HEK293 (cell line): ENCODE measurements at regions of chr11 and their contacts with region 1.

Region 1: DNA sequence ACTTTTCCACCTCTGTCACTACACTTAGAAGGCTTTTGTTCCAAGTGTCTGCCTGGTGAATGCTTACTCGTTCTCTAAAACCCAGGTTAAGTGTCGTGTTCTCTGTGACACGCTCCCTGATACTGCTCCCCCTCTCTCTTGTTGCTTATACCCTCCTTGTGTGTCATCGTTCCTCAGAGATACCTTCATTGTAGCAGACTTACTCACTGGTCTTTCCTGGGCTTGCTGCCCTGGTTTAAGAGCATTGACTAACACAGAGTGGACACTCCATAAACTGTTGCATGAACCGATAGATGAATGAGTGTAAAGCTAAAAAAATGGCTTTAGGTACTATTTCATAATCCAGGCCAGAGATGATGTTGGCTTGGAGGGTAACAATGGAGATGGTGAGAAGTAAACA is 171.3 kb downstream of the GRIK4 start:
- H3K4me3 ChIP-seq: no peak overlapping the region
- H3K27ac ChIP-seq: no peak overlapping the region
- H3K4me1 ChIP-seq: no peaks in the 10 kb centered on the region
- CTCF ChIP-seq: no peak

Region 2: GRCh38 chr11:120511116-120511819 is 171.6 kb before region 1 on chr11 and contains the start of gene GRIK4:
- CTCF ChIA-PET with region 1: interaction called, 59 read pairs
- POLR2A ChIA-PET with region 1: interaction called, 4 read pairs
- H3K4me3 ChIP-seq: peak within 1 kb of the TSS; percentile 42
- H3K27ac ChIP-seq: peak within 1 kb of the TSS; percentile 53; the same call in 1 of the 2 replicates
- H3K4me1 ChIP-seq: no peaks in the 10 kb centered on the region
- CTCF ChIP-seq: peak; percentile 90

Region 3: GRCh38 chr11:120667281-120667680 is 15.6 kb before region 1 on chr11:
- CTCF ChIA-PET with region 1: interaction called, 36 read pairs
- POLR2A ChIA-PET with region 1: no interaction called
- H3K4me3 ChIP-seq: no peak overlapping the region
- H3K27ac ChIP-seq: no peak overlapping the region
- H3K4me1 ChIP-seq: no peaks in the 10 kb centered on the region
- CTCF ChIP-seq: no peak

Region 4: DNA sequence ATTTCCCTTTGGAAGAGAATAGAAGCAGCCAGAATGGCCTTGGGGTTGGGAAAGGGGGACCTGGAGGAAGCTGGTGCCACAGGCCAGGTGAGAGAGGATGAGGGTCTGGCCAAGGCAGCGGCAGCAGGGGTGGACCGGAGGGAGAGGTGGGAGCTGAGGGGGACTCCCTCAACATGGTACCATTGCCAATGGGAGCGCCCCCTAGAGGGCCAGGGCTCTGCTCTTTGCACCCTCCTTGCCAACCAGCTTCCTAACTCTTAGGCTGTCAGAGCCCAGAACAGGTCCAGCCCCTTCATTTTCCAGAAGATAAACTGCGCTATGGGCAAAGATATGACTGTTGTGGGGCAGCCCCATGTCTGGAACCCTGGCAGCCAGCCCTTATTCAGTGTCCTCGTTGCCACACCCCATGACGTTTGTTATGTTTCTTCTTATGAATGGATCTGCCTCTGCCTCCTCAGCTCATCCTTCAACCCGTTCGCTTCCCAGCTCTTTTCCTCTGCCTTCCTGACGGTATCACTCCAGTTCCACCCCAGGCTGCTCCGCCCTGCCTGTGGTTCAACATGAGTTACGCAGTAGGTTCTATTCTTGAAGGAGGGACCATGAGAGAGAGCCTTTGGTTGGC is 13.8 kb after region 1 on chr11:
- CTCF ChIA-PET with region 1: interaction called, 59 read pairs
- POLR2A ChIA-PET with region 1: interaction called, 3 read pairs
- H3K4me3 ChIP-seq: no peak overlapping the region
- H3K27ac ChIP-seq: no peak overlapping the region
- H3K4me1 ChIP-seq: no peaks in the 10 kb centered on the region
- CTCF ChIP-seq: 0 out of 2 replicates have a peak, but pooled peaks have one; percentile 14

Region 5: GRCh38 chr11:120710354-120711131 is 27.7 kb after region 1 on chr11:
- CTCF ChIA-PET with region 1: interaction called, 13 read pairs
- POLR2A ChIA-PET with region 1: no interaction called
- H3K4me3 ChIP-seq: no peak overlapping the region
- H3K27ac ChIP-seq: no peak overlapping the region
- H3K4me1 ChIP-seq: no peaks in the 10 kb centered on the region
- CTCF ChIP-seq: no peak

Region 6: DNA sequence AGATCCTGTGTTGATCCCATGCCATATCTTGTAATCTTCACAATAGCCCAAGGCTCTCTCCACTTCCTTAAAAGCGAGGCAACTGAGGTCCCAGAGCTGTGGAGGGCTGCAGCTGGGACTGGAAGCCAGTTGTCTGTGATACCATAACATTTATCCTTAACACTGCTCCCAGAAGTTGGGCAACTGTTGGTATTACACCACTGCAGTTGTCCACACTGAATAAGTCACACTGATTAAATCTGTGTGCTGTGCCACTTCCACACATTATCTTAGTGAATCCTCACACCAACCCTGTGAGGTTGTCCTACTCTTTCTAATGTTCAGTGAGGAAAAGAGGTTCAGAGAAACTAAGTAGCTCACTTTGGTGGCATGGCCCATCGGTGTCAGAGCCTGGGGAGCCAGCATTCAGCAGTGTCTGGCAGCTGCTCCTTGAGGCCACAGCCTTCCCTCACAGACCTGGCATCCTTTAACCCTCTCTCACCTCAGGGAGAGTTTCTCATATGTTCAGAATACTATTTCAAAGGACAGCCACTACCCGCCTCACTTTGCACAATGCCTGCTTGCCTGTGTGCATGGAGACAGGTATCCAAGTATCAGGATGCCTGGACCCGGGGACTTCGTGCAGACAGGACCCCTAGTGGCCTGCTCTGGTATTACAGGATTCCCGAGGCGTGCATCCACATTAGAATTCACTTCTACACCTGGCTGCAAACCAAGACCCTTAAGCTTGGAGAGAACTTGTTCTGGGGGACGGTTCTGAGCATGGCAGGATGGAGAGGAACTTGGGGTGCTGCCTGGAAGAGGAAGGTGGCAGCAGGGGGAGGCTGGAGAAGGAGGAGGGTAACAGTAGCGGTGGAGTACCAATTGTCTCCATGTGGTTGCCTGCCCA is 119.2 kb after region 1 on chr11:
- CTCF ChIA-PET with region 1: interaction called, 12 read pairs
- POLR2A ChIA-PET with region 1: no interaction called
- H3K4me3 ChIP-seq: no peak overlapping the region
- H3K27ac ChIP-seq: no peak overlapping the region
- H3K4me1 ChIP-seq: no peaks in the 10 kb centered on the region
- CTCF ChIP-seq: 0 out of 2 replicates have a peak, but pooled peaks have one; percentile 12